Right ventricle myocardium superior (tissue), 1 donor: ENCODE measurements at regions of chr11 and their contacts with region 1.

Region 1: GRCh38 chr11:87352759-87353707 is 315.3 kb downstream of the TMEM135 start:
- DNase-seq: peak; percentile 92
- ATAC-seq: peak; percentile 94

Region 2: DNA sequence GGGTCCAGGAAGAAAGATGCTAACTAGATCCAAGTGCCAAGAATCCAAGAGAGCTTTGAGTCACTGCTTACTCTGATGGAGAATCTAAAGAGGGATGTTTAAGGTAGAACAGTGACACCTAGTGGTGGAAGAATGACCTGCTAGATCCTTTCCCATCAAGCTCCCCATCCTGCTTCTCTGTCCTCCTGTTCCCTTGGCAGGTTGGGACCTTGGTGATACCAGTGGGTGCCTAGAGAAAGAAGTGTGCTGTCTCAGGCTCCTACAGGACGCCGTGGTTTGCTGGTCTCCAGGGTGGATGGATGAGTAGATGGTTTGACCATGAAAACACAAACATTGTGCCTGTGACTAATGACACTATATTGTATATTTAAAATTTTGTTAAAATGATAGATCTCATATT is 68.4 kb after region 1 on chr11:
- intact Hi-C with region 1: loop called (anchors 2 kb)
- DNase-seq: no peak
- ATAC-seq: peak; percentile 94